ENCODE measurements at regions of chrX and their contacts with region 1.

Region 1: GRCh38 chrX:30570505-30570904 is 7.1 kb downstream of the TASL start:
- DNase-seq: no peak
- H3K4me3 Mint-ChIP-seq: no peak overlapping the region
- H3K27ac Mint-ChIP-seq: no peak overlapping the region
- H3K4me1 Mint-ChIP-seq: peaks cover 24% of the 10 kb centered on the region
- H3K27me3 Mint-ChIP-seq: no peaks in the 10 kb centered on the region

Region 2: DNA sequence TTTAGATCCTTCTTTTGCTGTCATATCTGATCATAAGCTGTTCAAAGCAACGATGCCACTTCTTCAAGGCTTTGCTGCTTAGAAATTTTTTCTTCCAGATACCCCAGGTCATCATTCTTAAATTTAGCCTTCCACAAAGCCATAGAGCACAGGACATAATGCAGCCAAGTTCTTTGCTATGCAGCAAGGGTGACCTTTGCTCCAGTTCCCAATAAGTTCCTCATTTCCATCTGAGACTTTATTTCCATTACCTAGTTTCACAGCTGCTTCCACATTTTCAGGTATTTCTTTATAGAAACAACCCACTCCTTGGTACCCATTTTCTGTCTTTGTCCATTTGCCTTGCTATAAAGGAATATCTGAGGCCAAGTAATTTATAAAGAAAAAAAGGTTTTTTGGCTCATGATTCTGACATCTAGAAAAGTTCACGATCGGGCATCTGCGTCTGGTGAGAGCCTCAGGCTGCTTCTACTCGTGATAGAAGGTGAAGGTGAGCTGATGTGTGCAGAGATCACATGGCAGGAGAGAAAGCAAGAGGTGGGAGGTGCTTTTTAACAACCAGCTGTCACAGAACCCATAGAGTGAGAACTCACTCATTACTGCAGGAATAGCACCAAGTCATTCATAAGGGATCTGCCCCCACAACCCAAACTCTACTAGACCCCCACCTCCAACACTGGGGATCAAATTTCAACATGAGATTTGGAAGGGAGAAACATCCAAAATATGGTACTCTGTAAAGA is 18.8 kb after region 1 on chrX:
- CTCF ChIA-PET with region 1: interaction called, 10 read pairs
- DNase-seq: no peak
- H3K4me3 Mint-ChIP-seq: no peak overlapping the region
- H3K27ac Mint-ChIP-seq: no peak overlapping the region
- H3K4me1 Mint-ChIP-seq: peaks cover 9% of the 10 kb centered on the region
- H3K27me3 Mint-ChIP-seq: peaks cover 4% of the 10 kb centered on the region

Measured in activated naive CD4-positive, alpha-beta T cell treated with anti-CD3 and anti-CD28 coated beads, Interleukin-2, amount 10 ng/mL, durations not matched to agents 7 days and 5 days (primary cell).